Activated CD4-positive, alpha-beta T cell treated with anti-CD3 and anti-CD28 coated beads for 36 hours (primary cell): ENCODE measurements at regions of chr3 and their contacts with region 1.

Region 1: DNA sequence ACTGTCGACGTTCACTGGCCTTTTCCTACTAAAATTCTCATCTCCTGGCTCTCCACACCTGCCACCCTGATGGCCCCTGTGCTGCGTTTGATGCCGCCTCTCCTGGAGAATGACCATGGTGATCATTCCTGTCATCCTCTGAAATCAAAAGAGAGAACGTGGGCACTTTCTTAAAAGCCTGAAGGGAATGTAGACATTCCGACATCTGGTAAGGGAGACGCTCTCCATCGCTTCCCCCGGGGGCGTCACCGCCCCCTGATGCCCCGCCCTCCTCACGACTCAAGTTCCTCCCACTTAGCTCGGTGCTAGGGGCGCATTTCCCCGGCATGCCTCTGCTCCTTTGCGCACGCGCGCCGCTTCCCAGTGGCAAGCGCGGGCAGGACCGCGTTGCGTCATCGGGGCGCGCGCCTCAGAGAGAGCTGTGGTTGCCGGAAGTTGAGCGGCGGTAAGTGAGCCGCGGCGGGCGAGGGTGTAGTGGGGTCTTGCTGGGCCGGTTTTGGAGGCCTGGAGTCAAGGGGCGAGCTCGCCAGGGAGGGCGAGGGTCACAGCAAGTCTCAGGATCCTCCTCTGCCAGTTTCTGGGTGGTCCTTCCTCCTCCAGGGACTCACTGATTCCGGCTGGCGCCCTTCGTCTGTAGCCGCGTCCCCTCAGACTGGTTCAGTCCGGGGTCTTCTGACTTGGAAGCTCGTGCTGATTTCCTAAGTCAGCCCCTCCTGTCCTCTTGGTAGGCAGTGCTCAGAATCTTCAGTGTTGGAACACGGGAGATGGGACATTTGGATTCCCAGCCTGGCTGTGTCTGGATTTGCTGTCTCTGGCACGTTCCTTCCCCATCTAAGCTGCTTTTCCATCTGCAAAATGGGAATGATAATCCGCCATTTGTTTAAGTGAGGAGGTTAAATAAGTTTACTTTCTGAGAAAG is at the start of gene ATG7:
- DNase-seq: peak; percentile 98
- ATAC-seq: peak; percentile 97
- H3K4me3 Mint-ChIP-seq: peak within 1 kb of the TSS; percentile 93
- H3K27ac Mint-ChIP-seq: peak within 1 kb of the TSS; percentile 94
- H3K4me1 Mint-ChIP-seq: peaks cover 45% of the 10 kb centered on the region
- H3K27me3 Mint-ChIP-seq: no peaks in the 10 kb centered on the region
- total RNA-seq, gene ATG7: 31.6 to 34.5 TPM

Region 2: GRCh38 chr3:11059090-11059798 is 213.0 kb before region 1 on chr3:
- CTCF ChIA-PET with region 1: no interaction called
- POLR2A ChIA-PET with region 1: no interaction called
- intact Hi-C with region 1: no loop called
- DNase-seq: peak; percentile 72
- ATAC-seq: peak; percentile 89
- H3K4me3 Mint-ChIP-seq: no peak overlapping the region
- H3K27ac Mint-ChIP-seq: no peak overlapping the region
- H3K4me1 Mint-ChIP-seq: no peaks in the 10 kb centered on the region
- H3K27me3 Mint-ChIP-seq: peaks cover 24% of the 10 kb centered on the region

Region 3: DNA sequence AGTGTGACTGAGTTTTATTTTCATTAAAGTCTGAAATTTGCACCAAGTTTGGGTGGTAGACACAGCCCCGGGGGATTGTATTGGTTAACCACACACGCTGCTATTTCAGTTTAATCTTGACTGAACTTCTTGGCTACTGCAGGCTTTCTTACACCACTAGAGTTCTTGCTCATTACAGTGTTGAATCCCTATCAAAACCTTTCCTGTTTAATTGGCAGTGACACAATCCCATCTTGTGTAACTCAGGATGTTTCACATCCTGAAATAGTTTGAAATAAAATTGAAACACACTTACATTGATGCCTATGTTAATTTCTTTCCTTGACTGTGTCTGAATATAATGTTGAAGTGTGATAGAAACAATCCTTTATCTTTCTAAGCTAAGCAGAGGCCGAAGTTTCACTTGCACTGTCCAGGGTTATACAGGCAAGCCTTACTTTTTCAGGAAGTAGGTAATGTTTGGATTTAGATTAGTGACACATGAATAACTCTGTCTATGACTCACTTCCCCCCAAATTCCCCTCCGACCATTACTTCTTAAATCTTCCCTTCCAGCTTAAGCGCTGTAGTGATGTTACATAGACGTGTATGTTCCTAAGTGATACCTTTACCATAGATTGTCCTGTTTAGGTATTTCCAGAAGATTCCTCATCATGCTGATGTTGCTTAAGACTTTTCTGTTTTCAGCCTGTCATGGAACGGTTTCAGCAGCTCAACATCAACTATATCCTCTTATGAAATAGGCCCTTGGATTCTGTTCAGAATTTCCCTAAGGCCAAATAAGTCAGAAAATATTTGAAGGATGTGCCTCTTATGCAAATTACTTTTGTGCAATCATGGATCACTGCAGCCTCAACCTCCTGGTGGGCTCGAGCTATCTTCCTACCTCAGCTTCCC is 16.8 kb after region 1 on chr3:
- CTCF ChIA-PET with region 1: interaction called, 5 read pairs
- POLR2A ChIA-PET with region 1: interaction called, 5 read pairs
- intact Hi-C with region 1: loop called in 1 of 2 experiments (anchors 2 kb)
- DNase-seq: no peak
- ATAC-seq: peak; percentile 43
- H3K4me3 Mint-ChIP-seq: no peak overlapping the region
- H3K27ac Mint-ChIP-seq: peak overlapping the region; percentile 83
- H3K4me1 Mint-ChIP-seq: peaks cover 57% of the 10 kb centered on the region
- H3K27me3 Mint-ChIP-seq: no peaks in the 10 kb centered on the region

Region 4: GRCh38 chr3:11898611-11899325 is 626.5 kb after region 1 on chr3:
- CTCF ChIA-PET with region 1: no interaction called
- POLR2A ChIA-PET with region 1: no interaction called
- intact Hi-C with region 1: no loop called
- DNase-seq: no peak
- ATAC-seq: no peak
- H3K4me3 Mint-ChIP-seq: no peak overlapping the region
- H3K27ac Mint-ChIP-seq: no peak overlapping the region
- H3K4me1 Mint-ChIP-seq: no peaks in the 10 kb centered on the region
- H3K27me3 Mint-ChIP-seq: peaks cover 10% of the 10 kb centered on the region